Psoas muscle (tissue), 8 donors: ENCODE measurements at regions of chr6 and their contacts with region 1.

Region 1: GRCh38 chr6:38973178-38974054 is 75.2 kb upstream of the GLP1R start:
- DNase-seq: no peak
- ATAC-seq: peak; percentile 46 to 78 (median 70)
- H3K4me3 ChIP-seq: no peak overlapping the region
- H3K27ac ChIP-seq: no peak overlapping the region
- H3K4me1 ChIP-seq: no peaks in the 10 kb centered on the region
- H3K27me3 ChIP-seq: peaks cover 0 to 2% (median 1%) of the 10 kb centered on the region in 3 donors
- CTCF ChIP-seq: peak; percentile 66

Region 2: DNA sequence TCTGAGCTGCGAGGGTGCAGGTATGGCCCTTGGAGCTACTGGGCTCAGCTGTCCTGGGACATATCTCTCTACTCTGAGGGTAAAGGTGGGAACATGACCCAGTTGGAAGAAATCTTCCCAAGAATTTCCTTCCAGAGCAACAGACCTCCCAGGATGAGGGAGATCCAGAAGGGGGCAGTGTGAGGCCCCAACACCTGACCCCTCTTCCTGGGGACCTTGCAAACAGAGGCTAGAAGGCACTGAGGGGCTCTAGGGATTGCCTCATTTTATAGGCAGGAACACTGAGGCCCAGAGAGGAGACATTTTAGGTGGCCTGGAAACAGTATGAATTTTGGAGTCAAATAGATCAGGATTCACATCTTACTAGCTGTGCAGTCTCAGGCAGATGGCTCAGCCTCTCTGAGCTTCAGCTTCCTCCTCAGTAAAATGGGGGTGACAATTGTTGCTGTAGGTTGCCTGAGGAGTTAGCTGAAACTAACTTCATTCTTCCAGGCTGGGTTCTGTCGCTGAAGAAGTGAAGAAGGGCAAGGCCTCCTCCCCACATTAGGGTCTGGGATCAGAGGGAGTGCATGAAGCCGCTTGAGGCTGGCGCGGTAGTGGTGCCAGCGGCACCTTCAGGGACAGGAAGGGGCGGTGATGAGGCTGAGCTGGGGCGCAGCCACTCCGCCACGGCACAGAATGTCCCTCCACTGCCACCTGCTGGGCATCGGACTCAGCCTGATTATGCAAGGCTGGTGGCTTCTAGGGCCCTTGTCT is 329.4 kb after region 1 on chr6:
- intact Hi-C with region 1: loop called (anchors 2 to 10 kb)
- DNase-seq: peak; percentile 81 to 89
- ATAC-seq: peak; percentile 87 to 89 (median 88)
- H3K4me3 ChIP-seq: no peak overlapping the region
- H3K27ac ChIP-seq: no peak overlapping the region
- H3K4me1 ChIP-seq: no peaks in the 10 kb centered on the region
- H3K27me3 ChIP-seq: no peaks in the 10 kb centered on the region
- CTCF ChIP-seq: peak; percentile 81